WTC11 (cell line): ENCODE measurements at regions of chr2 and their contacts with region 1.

Region 1: GRCh38 chr2:205776139-205776538 is 93.8 kb downstream of the NRP2 start:
- DNase-seq: peak; percentile 95
- ATAC-seq: peak; percentile 98
- H3K4me3 Mint-ChIP-seq: peak overlapping the region; percentile 7; the same call in 1 of the 2 replicates
- H3K27ac Mint-ChIP-seq: no peak overlapping the region
- H3K4me1 Mint-ChIP-seq: peaks cover 9% of the 10 kb centered on the region
- H3K27me3 Mint-ChIP-seq: no peaks in the 10 kb centered on the region; the same call in 1 of the 2 replicates
- CTCF ChIP-seq: peak; percentile 92

Region 2: GRCh38 chr2:205590759-205591158 is 185.4 kb before region 1 on chr2:
- CTCF ChIA-PET with region 1: no interaction called
- POLR2A ChIA-PET with region 1: no interaction called
- DNase-seq: no peak
- ATAC-seq: no peak
- H3K4me3 Mint-ChIP-seq: no peak overlapping the region
- H3K27ac Mint-ChIP-seq: no peak overlapping the region
- H3K4me1 Mint-ChIP-seq: no peaks in the 10 kb centered on the region
- H3K27me3 Mint-ChIP-seq: no peaks in the 10 kb centered on the region
- CTCF ChIP-seq: no peak

Region 3: GRCh38 chr2:205885492-205886099 is 109.5 kb after region 1 on chr2:
- CTCF ChIA-PET with region 1: interaction called, 57 read pairs
- POLR2A ChIA-PET with region 1: interaction called, 3 read pairs
- DNase-seq: peak; percentile 96
- ATAC-seq: peak; percentile 95
- H3K4me3 Mint-ChIP-seq: no peak overlapping the region
- H3K27ac Mint-ChIP-seq: no peak overlapping the region
- H3K4me1 Mint-ChIP-seq: peaks cover 24% of the 10 kb centered on the region
- H3K27me3 Mint-ChIP-seq: peaks cover 3% of the 10 kb centered on the region; the same call in 1 of the 2 replicates
- CTCF ChIP-seq: peak; percentile 98